ENCODE measurements at regions of chr1 and their contacts with region 1.

Region 1: GRCh38 chr1:26417111-26417759 is 6.6 kb downstream of the LIN28A start:
- DNase-seq: peak; percentile 70 to 92 (median 85)
- ATAC-seq: peak; percentile 100
- H3K4me3 ChIP-seq: no peak overlapping the region
- H3K4me3 Mint-ChIP-seq: no peak overlapping the region
- H3K27ac ChIP-seq: no peak overlapping the region
- H3K27ac Mint-ChIP-seq: no peak overlapping the region
- H3K4me1 ChIP-seq: no peaks in the 10 kb centered on the region
- H3K4me1 Mint-ChIP-seq: no peaks in the 10 kb centered on the region
- H3K27me3 ChIP-seq: peaks cover 4 to 8% of the 10 kb centered on the region in 2 experiments
- H3K27me3 Mint-ChIP-seq: peaks cover 17% of the 10 kb centered on the region
- CTCF ChIP-seq: peak; percentile 79

Region 2: GRCh38 chr1:26169669-26170471 is 247.4 kb before region 1 on chr1 and contains the start of gene ZNF593:
- CTCF ChIA-PET with region 1: interaction called, 6 read pairs
- POLR2A ChIA-PET with region 1: no interaction called
- intact Hi-C with region 1: loop called in 1 of 2 experiments (anchors 5 kb)
- DNase-seq: peak; percentile 69 to 91 (median 85)
- ATAC-seq: peak; percentile 92
- H3K4me3 ChIP-seq: peak within 1 kb of the TSS; percentile 85 to 89
- H3K4me3 Mint-ChIP-seq: peak within 1 kb of the TSS; percentile 87
- H3K27ac ChIP-seq: peak within 1 kb of the TSS; percentile 77 to 78
- H3K27ac Mint-ChIP-seq: peak within 1 kb of the TSS; percentile 88
- H3K4me1 ChIP-seq: peaks cover 11% of the 10 kb centered on the region
- H3K4me1 Mint-ChIP-seq: peaks cover 12% of the 10 kb centered on the region
- H3K27me3 ChIP-seq: no peaks in the 10 kb centered on the region
- H3K27me3 Mint-ChIP-seq: no peaks in the 10 kb centered on the region
- CTCF ChIP-seq: peak; percentile 74
- total RNA-seq, gene ZNF593: 8.1 to 8.8 TPM

Region 3: GRCh38 chr1:26279456-26280332 is 137.5 kb before region 1 on chr1 and contains the start of gene SH3BGRL3:
- CTCF ChIA-PET with region 1: interaction called, 30 read pairs
- POLR2A ChIA-PET with region 1: interaction called, 7 read pairs
- intact Hi-C with region 1: loop called (anchors 1 kb)
- DNase-seq: peak; percentile 64 to 92 (median 85)
- ATAC-seq: peak; percentile 57
- H3K4me3 ChIP-seq: peak within 1 kb of the TSS; percentile 74 to 93
- H3K4me3 Mint-ChIP-seq: peak within 1 kb of the TSS; percentile 89
- H3K27ac ChIP-seq: peak within 1 kb of the TSS; percentile 69 to 90
- H3K27ac Mint-ChIP-seq: peak within 1 kb of the TSS; percentile 100
- H3K4me1 ChIP-seq: peaks cover 86% of the 10 kb centered on the region
- H3K4me1 Mint-ChIP-seq: peaks cover 86% of the 10 kb centered on the region
- H3K27me3 ChIP-seq: no peaks in the 10 kb centered on the region
- H3K27me3 Mint-ChIP-seq: no peaks in the 10 kb centered on the region
- CTCF ChIP-seq: no peak
- total RNA-seq, gene SH3BGRL3: 187 to 191 TPM

Region 4: DNA sequence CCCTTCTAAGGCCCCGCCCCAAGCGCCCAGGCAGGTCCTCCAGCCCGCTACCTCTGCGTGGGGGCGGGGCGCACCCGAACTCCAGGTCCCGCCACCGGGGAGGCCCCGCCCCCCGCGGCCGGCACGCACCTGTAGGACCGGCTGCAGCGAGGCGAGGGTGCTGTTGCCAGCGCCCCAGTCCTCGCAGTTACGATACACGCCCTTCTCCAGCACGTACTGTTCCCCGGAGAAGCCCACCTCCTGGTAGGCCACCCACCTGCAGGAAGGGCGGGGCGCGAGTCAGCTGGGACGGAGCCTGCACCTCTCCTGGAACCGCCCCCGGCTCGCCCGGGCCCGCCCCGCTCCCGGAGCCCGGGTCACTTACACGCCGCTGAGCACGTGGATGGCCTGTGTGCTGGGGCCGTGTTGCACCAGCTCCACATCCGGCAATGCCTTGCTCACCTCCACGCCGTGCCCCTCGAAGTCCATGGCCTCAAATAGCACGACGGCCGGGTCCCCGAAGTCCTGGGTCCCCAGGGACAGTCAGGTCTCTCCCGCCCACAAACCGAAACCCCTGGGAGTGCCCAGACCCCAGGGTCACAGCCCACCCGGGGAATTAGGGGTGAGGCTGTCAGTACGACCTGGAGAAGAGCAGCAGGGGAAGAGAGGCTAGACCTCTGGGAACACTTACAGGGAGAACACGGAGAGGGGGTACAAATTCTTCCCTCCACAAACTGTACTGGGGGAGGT is 80.6 kb before region 1 on chr1:
- CTCF ChIA-PET with region 1: interaction called, 4 read pairs
- POLR2A ChIA-PET with region 1: no interaction called
- intact Hi-C with region 1: loop called in 1 of 2 experiments (anchors 1 kb)
- DNase-seq: peak; percentile 67 to 91 (median 86)
- ATAC-seq: peak; percentile 86
- H3K4me3 ChIP-seq: peak overlapping the region; percentile 65 to 89
- H3K4me3 Mint-ChIP-seq: peak overlapping the region; percentile 87
- H3K27ac ChIP-seq: no peak overlapping the region
- H3K27ac Mint-ChIP-seq: no peak overlapping the region
- H3K4me1 ChIP-seq: peaks cover 18% of the 10 kb centered on the region
- H3K4me1 Mint-ChIP-seq: peaks cover 13% of the 10 kb centered on the region
- H3K27me3 ChIP-seq: no peaks in the 10 kb centered on the region
- H3K27me3 Mint-ChIP-seq: no peaks in the 10 kb centered on the region
- CTCF ChIP-seq: no peak

Region 5: GRCh38 chr1:26372039-26372438 is 45.2 kb before region 1 on chr1:
- CTCF ChIA-PET with region 1: interaction called, 23 read pairs
- POLR2A ChIA-PET with region 1: no interaction called
- intact Hi-C with region 1: no loop called
- DNase-seq: no peak
- ATAC-seq: no peak
- H3K4me3 ChIP-seq: no peak overlapping the region
- H3K4me3 Mint-ChIP-seq: no peak overlapping the region
- H3K27ac ChIP-seq: peak overlapping the region in 1 of 2 experiments; percentile 54
- H3K27ac Mint-ChIP-seq: peak overlapping the region; percentile 66
- H3K4me1 ChIP-seq: peaks cover 88% of the 10 kb centered on the region
- H3K4me1 Mint-ChIP-seq: peaks cover 82% of the 10 kb centered on the region
- H3K27me3 ChIP-seq: no peaks in the 10 kb centered on the region
- H3K27me3 Mint-ChIP-seq: no peaks in the 10 kb centered on the region
- CTCF ChIP-seq: no peak

Region 6: DNA sequence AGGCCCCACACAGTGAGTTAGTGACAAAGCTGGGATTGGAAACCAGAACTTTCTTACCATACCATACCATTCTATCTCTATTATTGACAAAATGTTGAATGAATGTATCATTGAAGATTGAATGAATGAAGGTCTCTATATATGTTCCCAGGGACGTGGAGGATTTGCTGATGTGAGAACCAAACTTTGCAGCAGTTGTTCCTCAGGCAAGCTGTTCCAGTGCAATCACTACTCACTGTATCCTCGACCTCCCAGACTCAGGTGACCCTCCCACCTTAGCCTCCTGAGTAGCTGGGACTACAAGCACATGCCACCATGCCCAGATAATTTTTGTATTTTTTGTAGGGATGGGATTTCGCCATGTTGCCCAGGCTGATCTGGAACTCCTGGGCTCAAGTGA is 18.2 kb before region 1 on chr1:
- CTCF ChIA-PET with region 1: interaction called, 61 read pairs
- POLR2A ChIA-PET with region 1: no interaction called
- intact Hi-C with region 1: no loop called
- DNase-seq: no peak
- ATAC-seq: no peak
- H3K4me3 ChIP-seq: no peak overlapping the region
- H3K4me3 Mint-ChIP-seq: no peak overlapping the region
- H3K27ac ChIP-seq: no peak overlapping the region
- H3K27ac Mint-ChIP-seq: no peak overlapping the region
- H3K4me1 ChIP-seq: no peaks in the 10 kb centered on the region
- H3K4me1 Mint-ChIP-seq: peaks cover 3% of the 10 kb centered on the region
- H3K27me3 ChIP-seq: peaks cover 0 to 2% of the 10 kb centered on the region in 2 experiments
- H3K27me3 Mint-ChIP-seq: peaks cover 11% of the 10 kb centered on the region
- CTCF ChIP-seq: no peak

Measured in CD8-positive, alpha-beta T cell (primary cell).